Activated B cell treated with CpG ODN at 0.5 μM for 24 hours (primary cell): ENCODE measurements at regions of chr11 and their contacts with region 1.

Region 1: GRCh38 chr11:64152841-64153691 is 12.8 kb downstream of the MACROD1 start:
- DNase-seq: peak; percentile 77
- ATAC-seq: peak; percentile 96
- H3K4me3 Mint-ChIP-seq: no peak overlapping the region
- H3K27ac Mint-ChIP-seq: no peak overlapping the region
- H3K4me1 Mint-ChIP-seq: peaks cover 3% of the 10 kb centered on the region
- H3K27me3 Mint-ChIP-seq: peaks cover 7% of the 10 kb centered on the region
- CTCF ChIP-seq: peak; percentile 97

Region 2: DNA sequence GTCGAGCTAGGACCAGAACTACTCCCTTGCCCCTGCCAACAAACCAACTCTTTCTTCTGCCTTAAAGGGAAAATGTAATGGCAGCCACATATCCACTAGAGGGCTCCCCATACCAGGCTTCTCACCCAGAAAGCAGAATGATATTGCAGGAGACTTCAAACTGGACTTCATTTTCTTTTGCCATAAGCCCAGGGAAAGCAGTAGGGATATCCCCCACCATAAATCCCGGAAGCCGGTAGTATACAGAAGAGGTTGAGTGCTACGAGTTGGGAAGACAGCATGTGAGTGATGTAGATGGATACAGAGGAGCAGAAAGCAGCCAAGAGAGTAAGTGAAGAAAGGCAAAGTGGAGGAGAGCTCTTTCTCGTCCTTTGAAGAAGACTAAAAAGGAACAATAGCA is 674.2 kb before region 1 on chr11:
- CTCF ChIA-PET with region 1: no interaction called
- POLR2A ChIA-PET with region 1: no interaction called
- intact Hi-C with region 1: loop called (anchors 5 kb)
- DNase-seq: no peak
- ATAC-seq: peak; percentile 31
- H3K4me3 Mint-ChIP-seq: no peak overlapping the region
- H3K27ac Mint-ChIP-seq: no peak overlapping the region
- H3K4me1 Mint-ChIP-seq: no peaks in the 10 kb centered on the region
- H3K27me3 Mint-ChIP-seq: peaks cover 33% of the 10 kb centered on the region
- CTCF ChIP-seq: peak; percentile 32

Region 3: GRCh38 chr11:63635762-63636465 is 517.2 kb before region 1 on chr11:
- CTCF ChIA-PET with region 1: no interaction called
- POLR2A ChIA-PET with region 1: no interaction called
- intact Hi-C with region 1: loop called (anchors 5 kb)
- DNase-seq: peak; percentile 23
- ATAC-seq: peak; percentile 72
- H3K4me3 Mint-ChIP-seq: no peak overlapping the region
- H3K27ac Mint-ChIP-seq: no peak overlapping the region
- H3K4me1 Mint-ChIP-seq: peaks cover 9% of the 10 kb centered on the region
- H3K27me3 Mint-ChIP-seq: no peaks in the 10 kb centered on the region
- CTCF ChIP-seq: no peak

Region 4: GRCh38 chr11:63745304-63746170 is 407.5 kb before region 1 on chr11:
- CTCF ChIA-PET with region 1: no interaction called
- POLR2A ChIA-PET with region 1: no interaction called
- intact Hi-C with region 1: loop called (anchors 1 kb)
- DNase-seq: no peak
- ATAC-seq: no peak
- H3K4me3 Mint-ChIP-seq: no peak overlapping the region
- H3K27ac Mint-ChIP-seq: no peak overlapping the region
- H3K4me1 Mint-ChIP-seq: no peaks in the 10 kb centered on the region
- H3K27me3 Mint-ChIP-seq: no peaks in the 10 kb centered on the region
- CTCF ChIP-seq: no peak

Region 5: DNA sequence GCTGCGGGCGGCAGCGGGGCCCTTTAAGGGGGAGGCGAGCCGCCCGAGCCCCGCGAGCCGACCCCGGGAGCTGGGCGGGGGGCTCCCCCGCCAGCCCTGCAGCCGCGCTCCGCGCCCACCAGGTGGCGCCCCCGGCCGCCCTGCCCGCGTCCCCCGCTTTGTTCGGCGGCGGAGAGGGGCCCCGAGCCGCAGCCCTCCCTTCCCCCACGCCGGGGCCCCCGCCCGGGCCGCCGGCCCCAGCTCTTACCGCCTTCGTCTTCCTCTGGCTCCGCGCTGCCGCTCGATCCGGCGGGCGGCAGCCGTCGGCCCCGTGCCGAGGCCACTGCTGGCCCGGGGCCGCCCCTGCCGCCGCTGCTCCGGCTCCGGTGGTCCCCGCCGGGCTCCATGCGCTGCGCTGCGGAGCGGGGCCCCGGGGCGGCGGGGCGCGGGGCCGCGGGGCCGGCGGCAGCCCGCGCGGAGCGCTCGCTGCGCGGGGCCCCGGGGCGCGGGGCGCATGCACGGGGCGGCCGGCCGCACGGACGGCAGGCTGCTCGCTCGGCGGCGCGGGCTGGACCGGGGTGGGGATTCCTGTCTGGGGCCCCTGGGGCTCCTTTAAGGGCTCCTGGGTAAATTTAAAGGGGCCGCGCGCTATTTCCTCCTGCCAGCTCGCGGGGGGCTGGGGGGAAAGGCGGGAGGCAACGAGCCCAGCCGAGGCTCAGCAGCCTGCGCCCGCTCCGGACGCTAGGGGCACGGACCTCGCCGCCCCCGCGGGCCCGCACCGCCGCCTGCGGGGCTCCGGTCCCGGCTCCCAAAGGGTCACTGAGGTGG is 384.6 kb before region 1 on chr11 and contains the start of gene ZFTA:
- CTCF ChIA-PET with region 1: interaction called, 5 read pairs
- POLR2A ChIA-PET with region 1: no interaction called
- intact Hi-C with region 1: loop called (anchors 1 kb)
- DNase-seq: peak; percentile 80
- ATAC-seq: peak; percentile 68
- H3K4me3 Mint-ChIP-seq: peak within 1 kb of the TSS; percentile 94
- H3K27ac Mint-ChIP-seq: peak within 1 kb of the TSS; percentile 83
- H3K4me1 Mint-ChIP-seq: peaks cover 11% of the 10 kb centered on the region
- H3K27me3 Mint-ChIP-seq: peaks cover 4% of the 10 kb centered on the region
- CTCF ChIP-seq: no peak
- total RNA-seq, gene ZFTA: 11.2 and 12.5 TPM in 2 replicates

Region 6: GRCh38 chr11:64000026-64000739 is 152.9 kb before region 1 on chr11:
- CTCF ChIA-PET with region 1: interaction called, 33 read pairs
- POLR2A ChIA-PET with region 1: interaction called, 3 read pairs
- intact Hi-C with region 1: loop called (anchors 1 kb)
- DNase-seq: peak; percentile 72
- ATAC-seq: peak; percentile 75
- H3K4me3 Mint-ChIP-seq: peak overlapping the region; percentile 56
- H3K27ac Mint-ChIP-seq: no peak overlapping the region
- H3K4me1 Mint-ChIP-seq: peaks cover 9% of the 10 kb centered on the region
- H3K27me3 Mint-ChIP-seq: peaks cover 2% of the 10 kb centered on the region
- CTCF ChIP-seq: no peak

Region 7: GRCh38 chr11:64571410-64572091 is 418.5 kb after region 1 on chr11:
- CTCF ChIA-PET with region 1: no interaction called
- POLR2A ChIA-PET with region 1: no interaction called
- intact Hi-C with region 1: no loop called
- DNase-seq: no peak
- ATAC-seq: no peak
- H3K4me3 Mint-ChIP-seq: no peak overlapping the region
- H3K27ac Mint-ChIP-seq: no peak overlapping the region
- H3K4me1 Mint-ChIP-seq: no peaks in the 10 kb centered on the region
- H3K27me3 Mint-ChIP-seq: peaks cover 6% of the 10 kb centered on the region
- CTCF ChIP-seq: no peak